Activated CD4-positive, alpha-beta T cell treated with anti-CD3 and anti-CD28 coated beads, Interleukin-2, amount 10 ng/mL, durations not matched to agents 24 days and 14 days (primary cell): ENCODE measurements at regions of chr22 and their contacts with region 1.

Region 1: DNA sequence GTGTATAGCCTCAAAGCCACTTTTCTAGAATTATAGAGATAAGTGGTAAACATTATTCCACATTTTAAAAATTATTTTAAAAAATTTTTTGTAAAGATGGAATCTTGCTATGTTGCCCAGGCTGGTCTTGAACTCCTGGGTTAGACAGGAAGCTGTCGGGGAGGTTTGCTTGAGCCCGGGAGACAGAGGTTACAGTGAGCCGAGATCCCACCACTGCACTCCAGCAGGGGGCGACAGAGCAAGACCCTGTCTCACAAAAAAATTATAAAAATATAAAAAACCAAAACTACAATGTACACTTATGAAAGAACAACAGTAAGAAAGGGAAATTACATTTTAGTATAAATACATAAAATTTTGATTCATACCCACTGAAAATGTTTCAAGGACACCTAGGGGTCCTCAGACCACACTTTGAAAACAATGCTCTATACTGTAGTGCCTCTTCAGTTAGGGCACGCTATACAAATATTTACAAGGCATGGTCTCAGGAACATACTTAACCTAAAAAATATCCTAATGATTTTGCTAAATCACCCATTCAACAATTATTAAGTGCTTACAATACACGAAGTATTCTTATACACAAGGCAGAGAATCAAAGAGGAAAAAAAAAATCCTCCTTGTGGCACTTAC is 111.2 kb downstream of the MRTFA start:
- DNase-seq: peak; percentile 88
- H3K4me3 Mint-ChIP-seq: no peak overlapping the region
- H3K27ac Mint-ChIP-seq: no peak overlapping the region
- H3K4me1 Mint-ChIP-seq: peaks cover 27% of the 10 kb centered on the region
- H3K27me3 Mint-ChIP-seq: no peaks in the 10 kb centered on the region

Region 2: DNA sequence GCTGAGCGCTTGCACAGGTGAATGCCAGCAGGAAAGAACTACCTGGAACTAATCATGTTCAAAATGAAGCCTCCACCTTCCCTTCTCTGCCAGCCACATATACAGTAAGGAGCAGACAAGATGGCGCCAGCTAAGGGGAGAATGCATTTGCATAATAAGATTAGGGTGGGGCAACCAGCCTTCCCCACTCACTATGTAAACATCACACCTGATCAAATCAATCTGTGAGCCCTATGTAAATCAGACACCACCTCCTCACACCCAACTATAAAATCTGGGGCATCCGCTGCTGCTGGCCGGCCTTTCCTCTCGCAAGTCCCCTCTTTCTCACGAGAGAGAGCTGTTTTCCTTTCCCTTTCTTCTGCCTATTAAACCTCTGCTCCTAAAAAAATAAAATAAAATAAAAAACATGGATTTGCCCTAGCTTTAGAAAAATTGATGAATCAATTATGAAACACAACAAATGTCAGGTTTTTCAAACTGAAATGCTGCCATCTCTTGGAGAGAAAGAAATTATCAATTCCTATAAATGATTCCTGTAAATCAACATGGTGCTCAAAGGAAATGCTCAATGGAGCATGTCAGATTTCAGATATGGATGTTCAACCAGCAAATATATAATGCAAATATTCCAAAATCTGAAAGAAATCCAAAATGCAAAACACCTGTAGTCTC is 46.1 kb before region 1 on chr22:
- intact Hi-C with region 1: no loop called
- DNase-seq: no peak
- H3K4me3 Mint-ChIP-seq: no peak overlapping the region
- H3K27ac Mint-ChIP-seq: no peak overlapping the region
- H3K4me1 Mint-ChIP-seq: peaks cover 28% of the 10 kb centered on the region
- H3K27me3 Mint-ChIP-seq: no peaks in the 10 kb centered on the region

Region 3: DNA sequence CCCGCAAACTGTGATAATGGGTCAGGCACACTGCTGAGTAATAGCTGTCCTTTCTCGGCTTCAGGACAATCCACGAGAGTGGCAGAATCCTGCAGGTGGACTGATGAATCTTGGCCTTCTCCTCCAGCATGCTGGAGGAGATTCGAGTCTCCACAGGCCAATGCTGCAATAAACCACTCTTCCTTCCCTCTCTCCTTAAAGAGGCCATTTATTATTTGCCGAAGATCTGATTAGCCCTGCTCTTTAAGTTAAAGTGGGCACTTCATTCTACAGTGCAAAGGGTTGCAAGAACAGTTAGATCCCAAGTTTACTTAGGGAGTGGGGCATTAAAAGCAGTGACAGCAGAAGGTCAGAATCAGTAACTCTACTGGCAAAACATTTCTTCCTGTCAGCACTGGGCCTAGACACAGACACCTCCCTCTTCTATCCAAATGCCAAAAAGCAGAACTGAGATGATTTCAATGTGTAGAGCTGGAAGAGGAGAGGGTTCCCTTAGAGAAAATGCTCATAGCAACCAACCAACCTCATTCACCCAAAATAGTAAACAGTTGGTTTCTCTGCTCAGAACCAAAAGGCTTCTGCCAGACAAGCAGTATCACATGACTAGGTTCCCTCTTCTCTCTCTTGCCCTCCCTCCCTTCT is 33.3 kb before region 1 on chr22:
- intact Hi-C with region 1: no loop called
- DNase-seq: no peak
- H3K4me3 Mint-ChIP-seq: no peak overlapping the region
- H3K27ac Mint-ChIP-seq: no peak overlapping the region
- H3K4me1 Mint-ChIP-seq: peaks cover 14% of the 10 kb centered on the region
- H3K27me3 Mint-ChIP-seq: no peaks in the 10 kb centered on the region

Region 4: GRCh38 chr22:40572976-40573375 is 47.6 kb after region 1 on chr22:
- intact Hi-C with region 1: loop called (anchors 1 kb)
- DNase-seq: no peak
- H3K4me3 Mint-ChIP-seq: no peak overlapping the region
- H3K27ac Mint-ChIP-seq: no peak overlapping the region
- H3K4me1 Mint-ChIP-seq: peaks cover 4% of the 10 kb centered on the region
- H3K27me3 Mint-ChIP-seq: no peaks in the 10 kb centered on the region

Region 5: GRCh38 chr22:40588726-40589125 is 63.4 kb after region 1 on chr22:
- intact Hi-C with region 1: no loop called
- DNase-seq: no peak
- H3K4me3 Mint-ChIP-seq: no peak overlapping the region
- H3K27ac Mint-ChIP-seq: no peak overlapping the region
- H3K4me1 Mint-ChIP-seq: peaks cover 27% of the 10 kb centered on the region
- H3K27me3 Mint-ChIP-seq: no peaks in the 10 kb centered on the region

Region 6: GRCh38 chr22:40636380-40637182 is 111.2 kb after region 1 on chr22 and contains the start of gene MRTFA:
- intact Hi-C with region 1: loop called (anchors 2 kb)
- DNase-seq: peak; percentile 100
- H3K4me3 Mint-ChIP-seq: peak within 1 kb of the TSS; percentile 91
- H3K27ac Mint-ChIP-seq: peak within 1 kb of the TSS; percentile 95
- H3K4me1 Mint-ChIP-seq: peaks cover 32% of the 10 kb centered on the region
- H3K27me3 Mint-ChIP-seq: no peaks in the 10 kb centered on the region
- total RNA-seq, gene MRTFA: 51.7 and 51.9 TPM in 2 replicates

Region 7: DNA sequence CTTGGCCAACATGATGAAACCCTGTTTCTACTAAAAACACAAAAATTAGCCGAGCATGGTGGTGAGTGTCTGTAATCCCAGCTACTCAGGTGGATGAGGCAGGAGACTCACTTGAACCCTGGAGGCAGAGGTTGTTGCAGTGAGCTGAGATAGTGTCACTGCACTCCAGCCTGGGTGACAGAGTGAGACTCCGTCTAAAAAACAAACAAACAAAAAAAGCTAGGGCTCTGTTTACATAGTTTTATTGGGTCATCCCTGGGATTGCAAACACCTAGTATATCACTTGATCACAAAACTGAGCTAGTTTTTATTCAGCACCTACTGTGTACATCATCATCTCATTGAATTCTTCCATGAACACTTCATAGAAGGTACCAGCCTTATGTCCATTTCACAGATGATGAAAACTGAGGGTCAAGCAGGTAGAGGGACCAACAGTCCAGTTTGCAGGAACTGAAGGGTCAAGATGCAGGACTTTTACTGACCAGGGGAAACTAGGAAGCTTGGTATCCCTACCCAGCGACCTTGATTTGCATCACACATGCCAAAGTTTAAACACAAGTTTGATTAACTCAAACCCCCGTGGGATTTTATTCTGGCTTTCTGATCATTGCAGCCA is 120.3 kb after region 1 on chr22:
- intact Hi-C with region 1: loop called (anchors 1 kb)
- DNase-seq: no peak
- H3K4me3 Mint-ChIP-seq: no peak overlapping the region
- H3K27ac Mint-ChIP-seq: no peak overlapping the region
- H3K4me1 Mint-ChIP-seq: peaks cover 14% of the 10 kb centered on the region
- H3K27me3 Mint-ChIP-seq: no peaks in the 10 kb centered on the region